ENCODE measurements at regions of chr19 and their contacts with region 1.

Region 1: GRCh38 chr19:41353466-41354342 is at the start of gene TGFB1:
- DNase-seq: peak; percentile 88 to 94 (median 94)
- H3K4me3 ChIP-seq: peak within 1 kb of the TSS; percentile 89 to 97 (median 95)
- H3K4me3 Mint-ChIP-seq: peak within 1 kb of the TSS; percentile 94 to 100
- H3K27ac ChIP-seq: peak within 1 kb of the TSS; percentile 56 to 88
- H3K27ac Mint-ChIP-seq: peak within 1 kb of the TSS; percentile 91 to 98 (median 96)
- H3K4me1 ChIP-seq: peaks cover 70 to 73% of the 10 kb centered on the region in 2 donors
- H3K4me1 Mint-ChIP-seq: peaks cover 71% of the 10 kb centered on the region
- H3K27me3 ChIP-seq: no peaks in the 10 kb centered on the region
- H3K27me3 Mint-ChIP-seq: peaks cover 0 to 1% (median 0%) of the 10 kb centered on the region in 3 donors
- CTCF ChIP-seq: peak; percentile 93
- polyA plus RNA-seq, gene TGFB1: 30.6 to 138 (median 42.2) TPM

Region 2: DNA sequence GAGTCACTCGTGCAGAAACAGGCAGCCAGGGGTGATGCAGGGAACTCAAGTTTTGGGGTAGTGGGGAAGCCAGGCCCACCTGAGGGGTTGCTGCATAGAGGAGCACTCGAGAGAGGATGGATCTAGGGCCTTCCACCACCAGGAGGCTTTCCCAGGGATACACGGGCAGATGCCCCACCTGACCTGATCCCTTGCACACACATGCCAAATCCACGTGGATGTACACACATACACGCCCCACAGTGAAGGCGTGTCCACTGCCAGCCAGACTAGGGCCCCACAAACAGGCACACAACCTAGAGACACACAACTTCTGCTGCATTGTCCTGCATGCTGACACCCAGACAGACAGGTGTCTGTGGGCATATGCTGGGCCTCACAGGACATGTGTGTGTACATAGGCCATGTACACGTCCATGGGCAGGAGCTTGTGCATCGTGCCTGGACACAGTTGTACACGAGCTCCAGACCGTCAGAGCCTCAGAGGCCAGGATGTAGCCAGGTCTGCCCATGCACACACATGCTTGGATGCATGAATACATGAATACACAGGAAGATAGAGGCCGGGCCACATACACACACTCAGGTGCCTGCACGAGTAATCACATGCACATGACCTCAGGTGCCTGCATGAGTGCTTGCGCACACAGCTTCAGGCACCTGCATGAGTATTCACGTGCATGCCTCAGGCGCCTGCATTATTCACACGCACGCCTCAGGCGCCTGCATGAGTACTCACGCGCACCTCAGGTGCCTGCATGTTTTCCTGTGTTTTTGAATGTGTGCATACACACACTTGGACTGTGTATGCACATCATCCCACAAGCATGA is 34.8 kb before region 1 on chr19:
- intact Hi-C with region 1: loop called in 1 of 2 experiments (anchors 5 kb)
- DNase-seq: no peak
- H3K4me3 ChIP-seq: no peak overlapping the region
- H3K4me3 Mint-ChIP-seq: no peak overlapping the region
- H3K27ac ChIP-seq: no peak overlapping the region
- H3K27ac Mint-ChIP-seq: peak overlapping the region in 1 of 7 donors; percentile 38
- H3K4me1 ChIP-seq: peaks cover 27 to 28% of the 10 kb centered on the region in 2 donors
- H3K4me1 Mint-ChIP-seq: peaks cover 27% of the 10 kb centered on the region
- H3K27me3 ChIP-seq: no peaks in the 10 kb centered on the region
- H3K27me3 Mint-ChIP-seq: peaks cover 0 to 1% (median 0%) of the 10 kb centered on the region in 3 donors
- CTCF ChIP-seq: no peak

Region 3: DNA sequence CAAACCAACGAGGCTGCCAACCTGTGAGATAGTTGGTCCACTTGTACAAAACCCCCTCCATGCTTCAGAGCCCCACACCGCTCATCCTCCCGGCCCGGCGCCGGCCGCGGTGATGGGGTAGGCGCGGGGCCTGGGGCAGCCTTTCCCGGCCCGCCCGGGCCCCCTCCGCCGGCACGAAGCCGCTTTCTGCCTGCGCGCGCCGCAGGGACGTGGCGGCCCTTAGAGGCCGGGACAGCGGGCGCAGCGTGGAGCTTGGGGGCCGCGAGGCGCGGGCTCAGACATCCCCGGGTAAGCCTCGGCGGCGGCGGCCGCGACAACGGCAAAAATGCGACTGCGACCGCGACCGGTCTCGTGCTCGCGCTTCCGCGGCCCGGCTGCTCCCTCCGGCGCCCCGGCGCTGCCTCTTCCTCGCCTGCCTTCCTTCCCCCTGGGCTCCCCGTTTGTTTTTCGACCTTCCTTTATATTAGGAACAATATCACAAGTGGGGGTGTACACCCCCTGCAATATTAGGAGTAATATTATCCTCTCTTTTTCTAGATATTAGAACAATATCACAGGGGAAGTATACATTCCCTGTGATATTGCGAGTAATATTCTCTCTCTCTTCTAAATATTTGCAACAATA is 168.3 kb after region 1 on chr19:
- intact Hi-C with region 1: loop called in 1 of 2 experiments (anchors 10 kb)
- DNase-seq: peak in 1 of 3 donors; percentile 18
- H3K4me3 ChIP-seq: peak overlapping the region; percentile 28 to 70 (median 66)
- H3K4me3 Mint-ChIP-seq: peak overlapping the region; percentile 80 to 86
- H3K27ac ChIP-seq: peak overlapping the region; percentile 10 to 70
- H3K27ac Mint-ChIP-seq: peak overlapping the region; percentile 84 to 94 (median 89)
- H3K4me1 ChIP-seq: peaks cover 19 to 31% of the 10 kb centered on the region in 2 donors
- H3K4me1 Mint-ChIP-seq: peaks cover 37% of the 10 kb centered on the region
- H3K27me3 ChIP-seq: no peaks in the 10 kb centered on the region
- H3K27me3 Mint-ChIP-seq: peaks cover 0 to 8% (median 1%) of the 10 kb centered on the region in 3 donors
- CTCF ChIP-seq: no peak

Region 4: GRCh38 chr19:41570639-41571112 is 217.0 kb after region 1 on chr19:
- intact Hi-C with region 1: no loop called
- DNase-seq: peak; percentile 81 to 84 (median 81)
- H3K4me3 ChIP-seq: no peak overlapping the region
- H3K4me3 Mint-ChIP-seq: no peak overlapping the region
- H3K27ac ChIP-seq: no peak overlapping the region
- H3K27ac Mint-ChIP-seq: peak overlapping the region in 1 of 7 donors; percentile 41
- H3K4me1 ChIP-seq: peaks cover 6 to 7% of the 10 kb centered on the region in 2 donors
- H3K4me1 Mint-ChIP-seq: peaks cover 8% of the 10 kb centered on the region
- H3K27me3 ChIP-seq: peaks cover 5 to 20% of the 10 kb centered on the region in 2 donors
- H3K27me3 Mint-ChIP-seq: peaks cover 13 to 23% (median 13%) of the 10 kb centered on the region in 3 donors
- CTCF ChIP-seq: peak; percentile 92